Dendritic cell treated with granulocyte-macrophage colony-stimulating factor and Interleukin-4, amounts not matched to agents 40 ng/mL and 50 ng/mL, for 4 days (primary cell): ENCODE measurements at regions of chr3 and their contacts with region 1.

Region 1: DNA sequence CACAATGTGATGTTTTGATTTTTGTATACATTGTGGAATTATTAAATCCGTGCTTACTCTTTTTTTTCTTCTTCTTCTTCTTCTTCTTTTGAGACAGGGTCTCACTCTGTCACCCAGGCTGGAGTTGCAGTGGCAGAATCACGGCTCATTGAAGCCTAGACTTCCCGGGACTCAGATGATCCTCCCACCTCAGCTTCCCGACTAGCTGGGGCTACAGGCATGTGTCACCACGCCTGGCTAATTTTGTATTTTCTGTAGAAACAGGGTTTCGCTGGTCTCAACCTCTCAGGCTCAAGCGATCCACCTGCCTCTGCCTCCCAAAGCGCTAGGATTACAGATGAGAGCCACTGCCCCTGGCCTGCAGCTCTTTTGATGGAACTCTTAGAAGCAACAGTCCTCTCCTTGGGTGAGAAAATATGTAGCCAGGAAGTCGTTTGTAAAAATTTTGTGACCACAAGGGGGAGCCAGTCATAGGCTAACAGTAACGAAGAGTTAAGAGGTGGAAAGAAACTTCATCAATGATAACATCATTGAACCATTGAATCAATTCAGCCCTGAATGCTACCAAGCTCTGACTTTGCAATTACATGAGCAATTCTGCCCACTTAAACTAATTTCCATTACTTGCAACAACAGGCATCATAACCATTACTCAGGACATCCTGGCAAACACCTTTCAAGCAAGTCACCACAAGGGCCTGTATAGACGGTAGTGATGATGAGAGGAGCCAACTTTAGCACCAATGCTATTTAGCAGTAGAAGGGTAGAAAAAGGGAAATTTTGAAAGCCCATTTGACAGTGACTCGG is 16.7 kb upstream of the CMTM7 start:
- H3K4me3 Mint-ChIP-seq: no peak overlapping the region
- H3K27ac Mint-ChIP-seq: no peak overlapping the region
- H3K4me1 Mint-ChIP-seq: peaks cover 18% of the 10 kb centered on the region
- H3K27me3 Mint-ChIP-seq: no peaks in the 10 kb centered on the region

Region 2: DNA sequence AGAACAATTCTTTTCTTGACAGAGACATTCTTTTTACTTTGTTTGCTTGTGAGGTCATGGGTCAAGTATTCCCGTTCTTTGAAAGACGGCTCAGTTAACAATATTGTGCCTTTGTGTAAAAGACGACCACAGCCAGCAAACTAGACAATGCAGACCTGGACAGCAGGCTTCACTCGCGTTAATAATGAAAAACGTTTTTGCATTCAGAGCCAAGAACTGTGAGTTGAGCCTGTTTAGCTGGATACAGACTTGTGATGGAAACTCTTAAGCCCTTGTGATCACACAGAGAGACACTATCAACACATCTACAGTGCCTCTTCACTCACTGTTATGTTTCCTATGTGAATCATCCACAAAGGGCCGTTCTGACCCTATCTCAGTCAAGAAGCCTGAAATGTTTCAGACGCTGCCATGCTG is 20.6 kb before region 1 on chr3:
- intact Hi-C with region 1: no loop called
- H3K4me3 Mint-ChIP-seq: no peak overlapping the region
- H3K27ac Mint-ChIP-seq: no peak overlapping the region
- H3K4me1 Mint-ChIP-seq: peaks cover 11% of the 10 kb centered on the region
- H3K27me3 Mint-ChIP-seq: no peaks in the 10 kb centered on the region

Region 3: DNA sequence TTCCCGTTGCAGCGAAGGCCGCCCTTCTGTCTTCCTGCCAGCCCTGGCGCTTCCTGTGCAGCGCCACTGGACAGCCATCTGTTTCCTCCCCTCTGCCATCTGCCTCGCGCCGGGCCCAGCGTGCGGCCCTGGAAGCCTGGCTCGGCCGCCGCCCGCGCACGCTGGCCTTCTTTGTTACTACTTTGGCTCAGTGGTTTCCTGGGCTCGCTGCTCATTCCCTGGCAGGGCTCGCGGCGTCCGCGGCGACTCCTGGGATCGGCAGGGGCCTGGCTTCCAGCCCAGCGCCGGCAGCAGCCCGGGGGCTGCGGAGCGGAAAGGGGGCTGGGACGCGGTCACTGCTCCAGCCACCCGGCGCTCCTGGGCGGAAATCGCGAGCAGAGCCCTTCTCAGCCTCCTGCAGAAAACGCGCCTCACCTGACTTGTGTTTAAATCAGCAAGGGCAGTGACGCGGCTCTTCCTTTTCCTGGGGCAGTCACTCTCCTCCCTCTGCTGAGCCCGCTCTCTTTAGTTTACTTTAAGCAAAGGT is 26.6 kb after region 1 on chr3:
- intact Hi-C with region 1: loop called (anchors 1 kb)
- H3K4me3 Mint-ChIP-seq: peak overlapping the region; percentile 73
- H3K27ac Mint-ChIP-seq: peak overlapping the region; percentile 95
- H3K4me1 Mint-ChIP-seq: peaks cover 88% of the 10 kb centered on the region
- H3K27me3 Mint-ChIP-seq: no peaks in the 10 kb centered on the region

Region 4: GRCh38 chr3:32675164-32675563 is 300.2 kb after region 1 on chr3:
- intact Hi-C with region 1: loop called (anchors 10 kb)
- H3K4me3 Mint-ChIP-seq: no peak overlapping the region
- H3K27ac Mint-ChIP-seq: no peak overlapping the region
- H3K4me1 Mint-ChIP-seq: no peaks in the 10 kb centered on the region
- H3K27me3 Mint-ChIP-seq: peaks cover 3% of the 10 kb centered on the region